ENCODE measurements at regions of chr11 and their contacts with region 1.

Region 1: GRCh38 chr11:1696608-1697570 is at the start of gene KRTAP5-6:
- DNase-seq: no peak
- H3K4me3 ChIP-seq: no peak within 1 kb of the TSS
- H3K4me1 ChIP-seq: peaks cover 8% of the 10 kb centered on the region
- H3K27me3 ChIP-seq: no peaks in the 10 kb centered on the region

Region 2: DNA sequence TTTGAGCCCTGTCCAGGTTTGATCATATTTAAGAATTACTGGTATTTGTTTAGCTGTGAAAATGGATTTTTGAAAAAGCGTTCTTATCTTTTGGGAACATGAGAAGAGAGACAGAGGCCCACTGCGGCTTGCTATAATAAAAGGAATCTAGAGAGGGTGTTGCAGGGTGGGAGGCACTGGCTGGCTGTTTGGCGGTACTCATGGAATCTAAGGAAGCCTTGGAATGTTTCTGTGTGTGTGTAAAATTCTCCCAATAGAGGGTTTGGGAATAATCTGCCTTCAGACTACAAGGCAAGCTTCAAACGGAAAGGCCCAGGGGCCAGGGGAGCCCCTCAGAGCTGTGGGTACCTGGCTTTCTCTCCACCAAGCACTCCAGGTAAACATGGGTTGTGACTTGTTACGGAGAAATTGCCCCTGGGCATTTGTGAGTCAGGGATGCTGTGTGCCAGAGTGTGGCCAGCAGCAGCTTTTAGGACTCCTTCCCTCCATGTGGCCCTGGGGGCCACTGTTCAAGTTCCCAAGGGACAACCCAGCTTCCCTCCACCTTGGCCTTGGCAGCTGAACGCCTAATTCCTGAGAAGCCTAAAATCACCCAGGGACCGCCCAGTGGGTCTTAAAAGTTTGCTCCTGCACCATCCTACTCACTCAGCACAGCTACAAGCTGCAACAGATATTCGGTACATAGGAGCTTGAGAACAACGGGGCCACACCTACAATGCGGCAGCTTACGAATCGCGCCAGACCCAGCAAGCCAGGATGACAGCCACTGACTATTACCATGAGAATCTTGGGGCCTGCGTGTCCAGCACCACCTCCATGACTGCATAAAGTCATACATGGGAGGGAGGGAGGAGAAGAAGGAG is 123.8 kb after region 1 on chr11:
- in situ Hi-C with region 1: loop called (anchors 5 kb)
- DNase-seq: no peak
- H3K4me3 ChIP-seq: no peak overlapping the region
- H3K4me1 ChIP-seq: no peaks in the 10 kb centered on the region
- H3K27me3 ChIP-seq: no peaks in the 10 kb centered on the region